A673 (cell line): ENCODE measurements at regions of chr21 and their contacts with region 1.

Region 1: GRCh38 chr21:38355992-38356797 is 99.4 kb downstream of the KCNJ15 start:
- DNase-seq: peak; percentile 78
- H3K4me3 ChIP-seq: no peak overlapping the region
- H3K27ac ChIP-seq: no peak overlapping the region
- H3K4me1 ChIP-seq: no peaks in the 10 kb centered on the region
- H3K27me3 ChIP-seq: peaks cover 14% of the 10 kb centered on the region
- CTCF ChIP-seq: peak; percentile 94

Region 2: DNA sequence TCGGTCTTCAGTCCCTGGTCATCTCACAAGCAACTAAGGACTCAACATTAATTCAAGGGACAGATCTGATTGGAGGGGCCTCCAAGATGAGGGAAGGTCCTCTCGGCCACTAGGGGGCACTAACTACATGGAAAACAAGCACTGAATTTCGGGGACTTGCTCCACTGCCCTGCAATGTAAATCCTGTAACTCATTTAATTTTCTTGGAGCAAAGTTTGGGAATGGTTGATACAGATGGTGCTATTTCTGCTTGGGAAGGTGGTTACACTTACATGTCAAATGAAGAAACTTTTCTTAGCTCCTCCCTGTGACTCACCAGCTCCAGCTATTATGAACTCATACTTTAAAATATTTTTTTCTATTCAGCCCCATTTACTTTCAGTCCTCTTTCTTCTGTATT is 196.8 kb before region 1 on chr21:
- CTCF ChIA-PET with region 1: interaction called, 5 read pairs
- POLR2A ChIA-PET with region 1: no interaction called
- intact Hi-C with region 1: loop called (anchors 2 kb)
- DNase-seq: peak; percentile 71
- H3K4me3 ChIP-seq: no peak overlapping the region
- H3K27ac ChIP-seq: no peak overlapping the region
- H3K4me1 ChIP-seq: no peaks in the 10 kb centered on the region
- H3K27me3 ChIP-seq: peaks cover 29% of the 10 kb centered on the region
- CTCF ChIP-seq: peak; percentile 88

Region 3: DNA sequence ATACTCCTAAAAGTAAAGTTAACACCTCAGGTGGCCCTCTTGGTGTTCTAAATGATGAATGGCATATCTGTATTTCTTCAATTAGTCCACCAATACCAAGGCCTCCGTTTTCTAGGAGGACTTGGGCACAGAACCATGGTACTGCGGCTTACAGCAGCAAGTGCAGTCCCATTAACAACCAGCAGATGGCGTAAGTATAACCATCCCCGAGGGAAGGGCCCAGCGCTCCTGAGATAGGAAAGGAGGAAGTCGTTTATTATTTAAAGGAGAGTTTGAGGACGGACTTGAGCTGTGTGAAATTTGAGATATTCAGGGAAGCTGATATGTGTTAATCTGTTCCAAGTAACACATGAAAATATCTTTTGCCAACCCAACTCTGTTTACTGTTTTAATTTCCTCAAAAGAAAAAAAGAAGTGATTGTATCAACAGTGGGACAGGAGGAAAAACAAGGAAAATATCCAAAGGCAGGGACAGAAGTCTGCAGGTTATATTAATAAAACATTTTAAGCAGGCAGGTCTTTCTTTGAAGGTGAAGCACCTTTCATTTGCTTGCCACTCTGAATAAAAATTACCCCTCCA is 137.1 kb before region 1 on chr21:
- CTCF ChIA-PET with region 1: interaction called, 19 read pairs
- POLR2A ChIA-PET with region 1: no interaction called
- intact Hi-C with region 1: loop called (anchors 1 kb)
- DNase-seq: peak; percentile 76
- H3K4me3 ChIP-seq: no peak overlapping the region
- H3K27ac ChIP-seq: no peak overlapping the region
- H3K4me1 ChIP-seq: no peaks in the 10 kb centered on the region
- H3K27me3 ChIP-seq: peaks cover 8% of the 10 kb centered on the region
- CTCF ChIP-seq: peak; percentile 90

Region 4: GRCh38 chr21:38367646-38368045 is 11.5 kb after region 1 on chr21:
- CTCF ChIA-PET with region 1: no interaction called
- POLR2A ChIA-PET with region 1: no interaction called
- intact Hi-C with region 1: no loop called
- DNase-seq: no peak
- H3K4me3 ChIP-seq: no peak overlapping the region
- H3K27ac ChIP-seq: no peak overlapping the region
- H3K4me1 ChIP-seq: no peaks in the 10 kb centered on the region
- H3K27me3 ChIP-seq: no peaks in the 10 kb centered on the region
- CTCF ChIP-seq: no peak

Region 5: GRCh38 chr21:38460171-38460742 is 104.1 kb after region 1 on chr21:
- CTCF ChIA-PET with region 1: no interaction called
- POLR2A ChIA-PET with region 1: no interaction called
- intact Hi-C with region 1: no loop called
- DNase-seq: no peak
- H3K4me3 ChIP-seq: no peak overlapping the region
- H3K27ac ChIP-seq: no peak overlapping the region
- H3K4me1 ChIP-seq: no peaks in the 10 kb centered on the region
- H3K27me3 ChIP-seq: no peaks in the 10 kb centered on the region
- CTCF ChIP-seq: no peak